CD8-positive, alpha-beta T cell (primary cell): ENCODE measurements at regions of chr7 and their contacts with region 1.

Region 1: GRCh38 chr7:116511552-116512519 is 12.3 kb downstream of the CAV2 start:
- DNase-seq: peak in 3 of 9 experiments; percentile 5 to 73 (median 60)
- ATAC-seq: peak; percentile 81
- H3K4me3 ChIP-seq: peak overlapping the region; percentile 30 to 62
- H3K4me3 Mint-ChIP-seq: peak overlapping the region; percentile 79
- H3K27ac ChIP-seq: peak overlapping the region in 1 of 2 experiments; percentile 71
- H3K27ac Mint-ChIP-seq: peak overlapping the region; percentile 53
- H3K4me1 ChIP-seq: no peaks in the 10 kb centered on the region
- H3K4me1 Mint-ChIP-seq: peaks cover 17% of the 10 kb centered on the region
- H3K27me3 ChIP-seq: peaks cover 0 to 4% of the 10 kb centered on the region in 2 experiments
- H3K27me3 Mint-ChIP-seq: peaks cover 24% of the 10 kb centered on the region
- CTCF ChIP-seq: no peak

Region 2: DNA sequence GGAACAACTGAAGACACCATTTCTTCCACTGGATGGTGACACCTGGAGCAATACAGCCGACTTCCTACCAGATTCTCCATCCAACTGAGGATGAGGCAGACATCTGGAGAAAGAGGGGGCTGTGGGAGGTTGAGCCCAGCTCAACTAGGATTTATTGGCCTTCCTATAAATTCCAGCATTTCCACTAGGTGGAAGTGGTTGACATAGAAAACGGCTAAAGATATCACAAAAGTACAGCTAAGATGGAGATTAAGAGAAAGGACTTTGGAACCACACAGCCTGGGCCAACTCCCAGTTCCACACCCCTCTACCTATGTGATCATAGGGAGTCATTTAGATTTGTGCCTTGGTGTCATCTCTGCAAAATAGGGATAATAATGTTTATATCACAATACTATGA is 73.6 kb before region 1 on chr7:
- CTCF ChIA-PET with region 1: no interaction called
- POLR2A ChIA-PET with region 1: no interaction called
- intact Hi-C with region 1: no loop called
- DNase-seq: no peak
- ATAC-seq: no peak
- H3K4me3 ChIP-seq: no peak overlapping the region
- H3K4me3 Mint-ChIP-seq: no peak overlapping the region
- H3K27ac ChIP-seq: no peak overlapping the region
- H3K27ac Mint-ChIP-seq: no peak overlapping the region
- H3K4me1 ChIP-seq: no peaks in the 10 kb centered on the region
- H3K4me1 Mint-ChIP-seq: no peaks in the 10 kb centered on the region
- H3K27me3 ChIP-seq: no peaks in the 10 kb centered on the region
- H3K27me3 Mint-ChIP-seq: peaks cover 9% of the 10 kb centered on the region
- CTCF ChIP-seq: no peak

Region 3: GRCh38 chr7:116478834-116479233 is 33.0 kb before region 1 on chr7:
- CTCF ChIA-PET with region 1: no interaction called
- POLR2A ChIA-PET with region 1: no interaction called
- intact Hi-C with region 1: no loop called
- DNase-seq: no peak
- ATAC-seq: no peak
- H3K4me3 ChIP-seq: no peak overlapping the region
- H3K4me3 Mint-ChIP-seq: no peak overlapping the region
- H3K27ac ChIP-seq: no peak overlapping the region
- H3K27ac Mint-ChIP-seq: no peak overlapping the region
- H3K4me1 ChIP-seq: no peaks in the 10 kb centered on the region
- H3K4me1 Mint-ChIP-seq: no peaks in the 10 kb centered on the region
- H3K27me3 ChIP-seq: no peaks in the 10 kb centered on the region
- H3K27me3 Mint-ChIP-seq: peaks cover 3% of the 10 kb centered on the region
- CTCF ChIP-seq: no peak

Region 4: DNA sequence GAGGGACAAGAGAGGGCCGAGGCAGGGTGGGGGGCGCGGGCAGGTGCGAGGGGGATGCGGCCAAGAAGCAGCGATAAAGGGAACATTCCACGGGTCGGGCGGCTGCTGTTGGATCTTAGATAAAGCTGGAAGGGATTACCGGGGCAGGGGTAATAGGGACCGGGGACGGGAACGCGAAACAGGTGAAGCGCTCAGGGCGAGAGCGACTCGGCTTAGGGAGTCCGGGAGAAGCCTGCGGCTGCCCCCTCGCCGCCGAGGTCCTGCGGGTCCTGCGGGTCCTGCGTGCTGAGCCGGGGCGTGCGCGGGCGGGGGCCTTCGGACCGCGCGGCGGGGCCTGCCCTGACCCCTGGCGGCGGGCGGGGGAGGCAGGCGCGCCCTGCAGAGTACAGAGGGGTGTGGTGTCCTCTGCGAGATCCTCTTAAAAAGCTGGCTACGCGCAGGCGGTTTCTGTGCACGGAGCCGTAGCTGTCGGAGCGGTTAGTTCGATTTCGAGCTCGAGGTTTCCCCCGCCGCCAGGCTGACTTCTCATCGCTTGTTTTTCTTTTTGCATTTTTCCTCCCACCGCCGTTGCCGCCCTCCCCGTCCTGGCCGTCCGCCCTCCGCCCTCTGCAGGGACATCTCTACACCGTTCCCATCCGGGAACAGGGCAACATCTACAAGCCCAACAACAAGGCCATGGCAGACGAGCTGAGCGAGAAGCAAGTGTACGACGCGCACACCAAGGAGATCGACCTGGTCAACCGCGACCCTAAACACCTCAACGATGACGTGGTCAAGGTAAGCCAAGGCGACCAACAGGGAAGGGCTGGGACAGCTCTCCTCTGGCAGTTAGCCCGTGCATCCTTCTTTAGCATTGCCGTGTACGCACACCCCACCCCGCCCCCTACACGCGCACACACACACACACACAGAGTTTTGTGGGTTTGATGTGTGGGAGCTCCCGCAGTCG is 14.4 kb after region 1 on chr7:
- CTCF ChIA-PET with region 1: interaction called, 7 read pairs
- POLR2A ChIA-PET with region 1: no interaction called
- intact Hi-C with region 1: loop called in 1 of 2 experiments (anchors 2 kb)
- DNase-seq: peak; percentile 19 to 80 (median 59)
- ATAC-seq: peak; percentile 92
- H3K4me3 ChIP-seq: peak overlapping the region; percentile 59 to 67
- H3K4me3 Mint-ChIP-seq: peak overlapping the region; percentile 83
- H3K27ac ChIP-seq: no peak overlapping the region
- H3K27ac Mint-ChIP-seq: no peak overlapping the region
- H3K4me1 ChIP-seq: peaks cover 21% of the 10 kb centered on the region
- H3K4me1 Mint-ChIP-seq: peaks cover 25% of the 10 kb centered on the region
- H3K27me3 ChIP-seq: peaks cover 15 to 31% of the 10 kb centered on the region in 2 experiments
- H3K27me3 Mint-ChIP-seq: peaks cover 60% of the 10 kb centered on the region
- CTCF ChIP-seq: peak; percentile 59